ENCODE measurements at regions of chr11 and their contacts with region 1.

Region 1: DNA sequence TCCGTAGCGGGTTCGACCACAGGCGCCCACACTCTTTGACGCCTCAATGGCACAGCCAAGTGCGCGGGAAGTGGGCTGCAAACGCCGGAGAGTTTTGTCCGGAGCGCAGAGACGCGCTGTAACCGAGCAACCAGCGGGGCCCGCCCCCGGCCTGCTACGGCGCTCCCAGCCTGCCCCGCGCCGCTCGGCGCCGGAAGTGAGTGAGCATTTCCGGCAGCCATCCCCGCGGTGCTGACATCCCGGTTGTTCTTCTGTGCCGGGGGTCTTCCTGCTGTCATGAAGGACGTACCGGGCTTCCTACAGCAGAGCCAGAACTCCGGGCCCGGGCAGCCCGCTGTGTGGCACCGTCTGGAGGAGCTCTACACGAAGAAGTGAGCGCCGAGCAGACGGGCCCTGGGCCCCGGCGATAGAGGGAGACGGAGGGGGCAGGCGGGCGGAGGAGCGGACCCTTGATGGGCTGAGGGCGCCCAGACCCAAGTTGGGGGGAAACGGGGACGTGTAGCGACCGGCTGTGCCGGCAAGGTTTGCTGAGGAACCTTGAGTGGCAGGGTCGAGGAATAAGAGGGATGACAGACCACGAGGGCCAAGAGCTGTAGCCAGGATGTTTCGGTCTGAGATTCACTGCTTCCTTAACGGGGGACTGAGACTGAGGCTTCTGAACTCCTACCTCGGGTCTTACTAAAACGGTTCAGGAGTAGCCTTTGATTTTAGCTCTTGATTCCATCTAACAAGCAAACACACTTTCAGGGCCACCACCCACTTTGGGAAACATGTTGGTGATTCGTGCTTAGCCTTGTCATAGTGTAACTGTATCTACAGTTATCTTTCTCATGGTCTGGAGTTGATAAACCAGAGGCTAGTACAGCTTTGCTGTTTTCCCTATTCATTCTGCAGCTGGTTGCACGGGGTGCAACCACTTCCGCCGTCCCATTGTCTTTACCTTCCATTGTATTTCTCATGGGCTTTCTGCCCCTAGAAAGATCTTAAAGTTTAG is at the start of gene PSMD13:
- DNase-seq: peak; percentile 96
- ATAC-seq: peak; percentile 86
- H3K4me3 Mint-ChIP-seq: peak within 1 kb of the TSS; percentile 92
- H3K27ac Mint-ChIP-seq: peak within 1 kb of the TSS; percentile 99
- H3K4me1 Mint-ChIP-seq: peaks cover 48% of the 10 kb centered on the region
- H3K27me3 Mint-ChIP-seq: no peaks in the 10 kb centered on the region
- total RNA-seq, gene PSMD13: 134 to 212 TPM

Region 2: DNA sequence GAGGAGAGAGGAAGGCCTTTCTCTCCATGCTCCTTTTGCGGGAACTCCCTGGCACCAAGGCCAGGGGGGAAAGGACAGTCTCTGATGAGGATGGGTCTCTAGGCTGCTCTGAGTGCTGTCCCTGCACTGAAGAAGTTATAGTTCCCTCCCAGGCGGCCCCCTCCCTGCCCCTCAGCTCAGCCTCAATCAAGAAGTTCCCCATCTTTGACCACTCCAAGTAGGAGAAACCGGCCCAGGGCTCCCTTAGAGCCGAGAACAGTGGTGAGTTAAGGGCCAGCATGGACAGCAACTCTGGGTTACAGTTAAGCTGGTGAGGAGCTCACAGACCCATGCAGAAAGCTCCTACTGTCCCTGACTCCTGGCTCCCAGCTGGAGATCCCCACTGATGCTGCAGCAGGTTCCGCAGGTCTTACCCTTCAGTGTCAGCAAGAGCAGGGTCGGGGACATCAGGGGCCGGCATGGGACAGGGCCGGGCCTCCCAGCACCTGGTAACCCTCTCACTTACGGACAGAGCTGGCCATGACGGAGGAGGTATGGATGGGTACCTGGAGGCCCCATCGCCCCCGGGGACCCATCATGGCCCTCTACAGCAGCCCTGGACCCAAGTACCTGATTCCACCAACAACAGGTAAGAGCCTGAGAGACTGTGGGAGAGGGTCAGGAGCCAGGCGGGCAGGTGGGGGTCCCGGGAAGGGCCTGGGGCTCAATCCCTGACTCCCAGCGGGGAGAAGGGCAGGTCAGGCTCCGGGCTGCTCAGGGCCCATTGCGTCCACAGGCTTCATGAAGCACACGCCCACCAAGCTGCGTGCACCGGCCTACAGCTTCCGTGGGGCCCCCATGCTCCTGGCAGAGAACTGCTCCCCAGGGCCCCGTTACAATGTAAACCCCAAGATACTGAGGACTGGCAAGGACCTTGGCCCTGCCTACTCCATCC is 40.0 kb before region 1 on chr11:
- CTCF ChIA-PET with region 1: no interaction called
- POLR2A ChIA-PET with region 1: no interaction called
- intact Hi-C with region 1: no loop called
- DNase-seq: peak; percentile 4
- ATAC-seq: no peak
- H3K4me3 Mint-ChIP-seq: no peak overlapping the region
- H3K27ac Mint-ChIP-seq: no peak overlapping the region
- H3K4me1 Mint-ChIP-seq: peaks cover 16% of the 10 kb centered on the region
- H3K27me3 Mint-ChIP-seq: no peaks in the 10 kb centered on the region

Region 3: GRCh38 chr11:269146-269890 is 32.2 kb after region 1 on chr11:
- CTCF ChIA-PET with region 1: interaction called, 6 read pairs
- POLR2A ChIA-PET with region 1: interaction called, 3 read pairs
- intact Hi-C with region 1: loop called (anchors 1 kb)
- DNase-seq: peak; percentile 72
- ATAC-seq: peak; percentile 71
- H3K4me3 Mint-ChIP-seq: peak overlapping the region; percentile 79
- H3K27ac Mint-ChIP-seq: peak overlapping the region; percentile 99
- H3K4me1 Mint-ChIP-seq: peaks cover 43% of the 10 kb centered on the region
- H3K27me3 Mint-ChIP-seq: no peaks in the 10 kb centered on the region

Region 4: DNA sequence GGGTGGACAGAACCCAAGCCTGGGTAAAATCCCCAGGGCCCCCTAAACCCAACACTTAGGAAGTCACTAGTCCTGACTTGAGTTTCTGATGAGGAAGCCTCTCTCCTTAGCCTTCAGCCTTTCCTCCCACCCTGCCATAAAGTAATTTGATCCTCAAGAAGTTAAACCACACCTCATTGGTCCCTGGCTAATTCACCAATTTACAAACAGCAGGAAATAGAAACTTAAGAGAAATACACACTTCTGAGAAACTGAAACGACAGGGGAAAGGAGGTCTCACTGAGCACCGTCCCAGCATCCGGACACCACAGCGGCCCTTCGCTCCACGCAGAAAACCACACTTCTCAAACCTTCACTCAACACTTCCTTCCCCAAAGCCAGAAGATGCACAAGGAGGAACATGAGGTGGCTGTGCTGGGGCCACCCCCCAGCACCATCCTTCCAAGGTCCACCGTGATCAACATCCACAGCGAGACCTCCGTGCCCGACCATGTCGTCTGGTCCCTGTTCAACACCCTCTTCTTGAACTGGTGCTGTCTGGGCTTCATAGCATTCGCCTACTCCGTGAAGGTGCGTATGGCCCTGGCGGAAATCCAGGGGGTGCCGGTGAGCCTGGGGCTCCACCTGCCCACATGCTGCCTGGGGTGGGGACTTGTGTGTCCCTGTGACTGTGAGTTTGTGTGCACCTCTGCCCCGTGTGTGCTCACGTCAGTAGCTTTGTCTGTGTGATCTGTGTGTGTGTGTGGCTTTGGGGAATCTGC is 76.9 kb after region 1 on chr11 and contains the start of gene IFITM1:
- CTCF ChIA-PET with region 1: no interaction called
- POLR2A ChIA-PET with region 1: interaction called, 3 read pairs
- intact Hi-C with region 1: loop called (anchors 2 kb)
- DNase-seq: peak; percentile 78
- ATAC-seq: peak; percentile 40
- H3K4me3 Mint-ChIP-seq: peak within 1 kb of the TSS; percentile 95
- H3K27ac Mint-ChIP-seq: peak within 1 kb of the TSS; percentile 99
- H3K4me1 Mint-ChIP-seq: peaks cover 29% of the 10 kb centered on the region
- H3K27me3 Mint-ChIP-seq: no peaks in the 10 kb centered on the region
- total RNA-seq, gene IFITM1: 248 to 285 TPM

Region 5: GRCh38 chr11:488999-489398 is 251.9 kb after region 1 on chr11:
- CTCF ChIA-PET with region 1: no interaction called
- POLR2A ChIA-PET with region 1: no interaction called
- intact Hi-C with region 1: no loop called
- DNase-seq: no peak
- ATAC-seq: no peak
- H3K4me3 Mint-ChIP-seq: no peak overlapping the region
- H3K27ac Mint-ChIP-seq: no peak overlapping the region
- H3K4me1 Mint-ChIP-seq: no peaks in the 10 kb centered on the region
- H3K27me3 Mint-ChIP-seq: no peaks in the 10 kb centered on the region

Region 6: DNA sequence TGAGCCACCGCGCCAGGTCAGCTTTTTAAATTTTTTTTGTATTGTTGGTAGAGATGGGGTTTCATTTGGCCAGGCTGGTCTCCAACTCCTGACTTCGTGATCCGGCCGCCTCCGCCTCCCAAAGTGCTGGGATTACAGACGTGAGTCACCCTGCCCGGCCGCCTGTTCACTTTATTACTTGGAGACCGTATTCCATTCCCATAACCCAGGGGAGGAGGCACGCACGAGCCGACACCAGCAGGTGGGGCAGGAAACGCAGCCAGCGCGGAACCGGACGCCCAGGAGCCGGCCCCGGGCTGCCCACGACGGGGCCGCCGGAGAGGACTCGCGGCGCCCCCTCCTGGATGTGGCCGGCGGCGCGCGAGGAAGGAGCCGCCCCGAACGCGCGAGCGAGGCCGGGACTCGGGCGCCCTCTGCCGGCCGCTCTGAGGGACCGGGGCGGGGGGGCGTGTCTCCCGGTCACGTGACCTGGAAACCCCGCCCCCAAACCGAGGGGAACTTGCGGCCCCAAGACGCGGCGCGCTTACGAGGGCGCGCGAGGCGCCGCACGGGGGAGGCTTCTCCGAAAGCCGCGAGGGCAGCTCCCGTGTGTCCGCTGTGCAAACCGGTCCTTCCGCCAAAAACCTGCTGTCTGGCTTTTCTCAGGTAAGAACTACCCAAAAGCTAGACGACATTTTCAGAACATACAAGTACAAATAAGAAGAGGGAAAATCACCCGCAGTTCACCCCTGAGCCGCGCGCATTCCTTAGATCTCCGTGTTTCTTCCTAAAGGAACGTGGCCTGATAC is 281.6 kb after region 1 on chr11:
- CTCF ChIA-PET with region 1: interaction called, 3 read pairs
- POLR2A ChIA-PET with region 1: no interaction called
- intact Hi-C with region 1: loop called in 1 of 2 experiments (anchors 1 kb)
- DNase-seq: peak; percentile 94
- ATAC-seq: peak; percentile 95
- H3K4me3 Mint-ChIP-seq: peak overlapping the region; percentile 67
- H3K27ac Mint-ChIP-seq: peak overlapping the region; percentile 85
- H3K4me1 Mint-ChIP-seq: peaks cover 3% of the 10 kb centered on the region
- H3K27me3 Mint-ChIP-seq: no peaks in the 10 kb centered on the region

Region 7: GRCh38 chr11:747158-748006 is 510.3 kb after region 1 on chr11 and contains the start of gene TALDO1:
- CTCF ChIA-PET with region 1: no interaction called
- POLR2A ChIA-PET with region 1: no interaction called
- intact Hi-C with region 1: loop called in 1 of 2 experiments (anchors 1 kb)
- DNase-seq: peak; percentile 92
- ATAC-seq: peak; percentile 91
- H3K4me3 Mint-ChIP-seq: peak within 1 kb of the TSS; percentile 82
- H3K27ac Mint-ChIP-seq: peak within 1 kb of the TSS; percentile 72
- H3K4me1 Mint-ChIP-seq: peaks cover 20% of the 10 kb centered on the region
- H3K27me3 Mint-ChIP-seq: no peaks in the 10 kb centered on the region
- total RNA-seq, gene TALDO1: 239 to 246 TPM

Measured in activated CD4-positive, alpha-beta T cell treated with anti-CD3 and anti-CD28 coated beads for 36 hours (primary cell).